ENCODE measurements at regions of chr1 and their contacts with region 1.

Region 1: GRCh38 chr1:77888081-77888780 is at the start of gene NEXN:
- DNase-seq: peak; percentile 91
- ATAC-seq: peak; percentile 92
- total RNA-seq, gene NEXN: 365 TPM

Region 2: DNA sequence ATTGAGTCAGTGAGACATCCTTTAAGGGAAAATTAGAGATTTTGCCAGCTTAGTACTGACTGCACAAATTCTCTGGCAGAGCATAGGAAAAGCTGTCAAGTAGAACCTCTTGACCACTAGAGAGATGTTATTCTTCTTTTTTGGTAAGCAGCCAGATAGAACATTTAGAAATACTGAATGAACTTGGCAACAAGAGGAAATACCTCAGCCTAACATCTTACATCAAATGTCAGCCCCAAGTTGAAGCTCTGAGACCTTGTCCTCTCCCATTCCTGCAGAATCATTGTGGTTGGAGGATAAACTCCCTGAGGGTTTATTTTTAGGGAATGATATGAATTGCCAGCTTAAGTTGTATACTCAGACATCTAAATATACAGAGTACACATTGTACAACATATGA is 55.3 kb before region 1 on chr1:
- intact Hi-C with region 1: loop called (anchors 1 kb)
- DNase-seq: no peak
- ATAC-seq: peak; percentile 91